ENCODE measurements at regions of chr7 and their contacts with region 1.

Region 1: GRCh38 chr7:151744656-151745638 is 132.0 kb downstream of the PRKAG2 start:
- DNase-seq: peak; percentile 69
- ATAC-seq: peak; percentile 63
- H3K4me3 Mint-ChIP-seq: no peak overlapping the region
- H3K27ac Mint-ChIP-seq: no peak overlapping the region
- H3K4me1 Mint-ChIP-seq: peaks cover 33% of the 10 kb centered on the region
- H3K27me3 Mint-ChIP-seq: no peaks in the 10 kb centered on the region

Region 2: GRCh38 chr7:151665368-151665767 is 79.6 kb before region 1 on chr7:
- CTCF ChIA-PET with region 1: no interaction called
- POLR2A ChIA-PET with region 1: no interaction called
- intact Hi-C with region 1: no loop called
- DNase-seq: no peak
- ATAC-seq: no peak
- H3K4me3 Mint-ChIP-seq: no peak overlapping the region
- H3K27ac Mint-ChIP-seq: no peak overlapping the region
- H3K4me1 Mint-ChIP-seq: no peaks in the 10 kb centered on the region
- H3K27me3 Mint-ChIP-seq: no peaks in the 10 kb centered on the region

Region 3: DNA sequence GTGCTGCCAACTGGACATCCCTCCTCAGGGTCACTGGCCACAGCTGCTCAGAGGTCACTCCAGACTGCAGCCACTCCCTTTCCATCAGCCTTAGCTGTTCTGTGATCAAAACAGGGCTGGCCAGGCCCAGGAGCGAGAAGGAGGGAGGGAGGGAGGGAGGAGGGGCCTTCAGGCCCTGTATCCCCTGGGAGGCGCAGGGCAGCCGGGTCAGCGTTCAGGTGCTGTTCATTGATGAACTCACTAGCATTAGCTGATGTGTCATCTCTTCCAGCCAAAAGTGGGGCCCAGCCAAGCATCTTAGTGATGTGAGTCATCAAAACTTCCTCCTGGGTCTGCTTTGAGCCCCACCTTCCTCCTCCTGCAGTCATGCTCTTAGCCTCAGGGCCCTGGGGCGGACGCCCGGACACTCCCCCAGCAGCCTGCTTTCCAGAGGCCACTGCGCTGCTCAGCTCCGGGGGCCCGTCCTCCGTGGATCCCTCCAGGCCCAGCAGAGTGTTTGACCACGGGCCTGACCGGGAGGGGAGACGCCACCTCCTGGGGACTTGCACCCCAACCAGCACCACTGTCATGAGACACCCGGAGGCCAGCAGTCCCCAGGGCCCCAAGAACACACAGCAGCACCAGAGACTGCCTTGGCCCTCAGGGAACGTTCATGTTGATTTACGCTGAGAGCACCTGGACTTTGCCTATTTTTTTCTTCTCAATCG is 17.2 kb before region 1 on chr7:
- CTCF ChIA-PET with region 1: no interaction called
- POLR2A ChIA-PET with region 1: no interaction called
- intact Hi-C with region 1: loop called in 1 of 2 experiments (anchors 1 kb)
- DNase-seq: peak; percentile 85
- ATAC-seq: peak; percentile 99
- H3K4me3 Mint-ChIP-seq: no peak overlapping the region
- H3K27ac Mint-ChIP-seq: peak overlapping the region; percentile 60
- H3K4me1 Mint-ChIP-seq: peaks cover 19% of the 10 kb centered on the region
- H3K27me3 Mint-ChIP-seq: no peaks in the 10 kb centered on the region

Region 4: GRCh38 chr7:151769188-151769841 is 24.4 kb after region 1 on chr7:
- CTCF ChIA-PET with region 1: no interaction called
- POLR2A ChIA-PET with region 1: no interaction called
- intact Hi-C with region 1: loop called in 1 of 2 experiments (anchors 1 kb)
- DNase-seq: peak; percentile 49
- ATAC-seq: peak; percentile 85
- H3K4me3 Mint-ChIP-seq: peak overlapping the region; percentile 40
- H3K27ac Mint-ChIP-seq: peak overlapping the region; percentile 93
- H3K4me1 Mint-ChIP-seq: peaks cover 51% of the 10 kb centered on the region
- H3K27me3 Mint-ChIP-seq: no peaks in the 10 kb centered on the region

Region 5: DNA sequence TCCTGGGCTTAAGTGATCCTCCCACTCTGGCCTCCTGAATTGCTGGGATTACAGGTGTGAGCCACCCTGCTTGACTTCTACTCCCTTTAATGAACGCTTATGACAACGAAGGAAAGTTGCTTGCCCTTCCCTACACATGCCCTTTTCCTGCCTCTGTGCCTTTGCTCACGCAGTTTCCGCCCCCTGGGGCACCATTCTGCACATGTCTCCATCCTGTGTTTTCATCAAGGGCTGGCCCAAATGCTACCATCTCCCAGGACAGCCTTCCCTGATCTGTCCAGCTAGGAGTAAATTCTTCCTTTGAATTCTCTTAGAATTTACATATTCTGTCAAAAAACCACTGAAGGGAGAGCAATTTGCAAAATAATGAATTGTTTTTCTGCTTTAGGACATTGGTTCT is 740.9 kb after region 1 on chr7:
- CTCF ChIA-PET with region 1: no interaction called
- POLR2A ChIA-PET with region 1: no interaction called
- intact Hi-C with region 1: no loop called
- DNase-seq: no peak
- ATAC-seq: no peak
- H3K4me3 Mint-ChIP-seq: no peak overlapping the region
- H3K27ac Mint-ChIP-seq: no peak overlapping the region
- H3K4me1 Mint-ChIP-seq: no peaks in the 10 kb centered on the region
- H3K27me3 Mint-ChIP-seq: no peaks in the 10 kb centered on the region

Region 6: DNA sequence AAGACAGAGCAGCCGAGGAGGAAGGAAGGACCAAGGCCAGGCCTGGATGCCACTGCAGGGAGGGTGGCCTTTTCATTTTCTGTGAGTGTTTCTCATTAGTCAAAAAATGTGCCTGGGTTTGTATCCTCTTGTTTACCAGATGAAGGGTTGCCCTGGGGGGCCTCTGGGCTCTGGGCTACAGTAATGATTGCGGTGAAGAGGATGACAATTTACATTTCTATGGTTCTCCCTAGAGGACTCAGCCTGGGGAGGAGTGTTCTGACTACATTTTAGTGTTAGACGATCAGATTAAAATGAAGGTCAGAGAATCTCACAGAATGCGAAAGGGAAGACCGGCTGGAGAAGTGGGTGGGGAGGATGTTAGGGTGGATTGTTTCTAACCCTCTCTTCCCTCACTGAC is 798.9 kb after region 1 on chr7:
- CTCF ChIA-PET with region 1: no interaction called
- POLR2A ChIA-PET with region 1: no interaction called
- intact Hi-C with region 1: no loop called
- DNase-seq: no peak
- ATAC-seq: no peak
- H3K4me3 Mint-ChIP-seq: no peak overlapping the region
- H3K27ac Mint-ChIP-seq: no peak overlapping the region
- H3K4me1 Mint-ChIP-seq: no peaks in the 10 kb centered on the region
- H3K27me3 Mint-ChIP-seq: no peaks in the 10 kb centered on the region